Psoas muscle (tissue), 8 donors: ENCODE measurements at regions of chr3 and their contacts with region 1.

Region 1: DNA sequence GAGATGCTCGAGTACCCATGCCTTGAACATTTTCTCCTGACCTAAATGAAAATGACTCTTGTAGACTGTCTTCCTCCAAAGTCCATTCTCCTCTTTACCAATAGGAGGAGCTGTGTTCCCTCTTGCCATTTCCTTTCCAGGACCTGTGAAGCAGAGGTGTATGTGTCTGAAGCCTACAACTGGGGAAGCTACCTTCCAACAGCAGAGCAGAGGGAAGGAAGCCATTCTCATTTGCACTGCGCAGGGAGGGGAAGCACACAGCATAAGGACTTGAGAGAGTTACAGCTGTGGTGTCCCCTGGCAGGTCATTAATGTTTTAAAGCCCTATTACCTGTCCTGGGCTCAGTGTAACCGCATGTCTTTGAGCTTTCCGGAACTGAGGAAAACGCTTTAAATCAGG is 38.7 kb downstream of the HSPBAP1 start:
- DNase-seq: no peak
- ATAC-seq: peak; percentile 79 to 87 (median 83)
- H3K4me3 ChIP-seq: no peak overlapping the region
- H3K27ac ChIP-seq: peak overlapping the region; percentile 44
- H3K4me1 ChIP-seq: peaks cover 5% of the 10 kb centered on the region
- H3K27me3 ChIP-seq: no peaks in the 10 kb centered on the region
- CTCF ChIP-seq: peak; percentile 69

Region 2: GRCh38 chr3:122458992-122459391 is 295.9 kb before region 1 on chr3:
- intact Hi-C with region 1: no loop called
- DNase-seq: no peak
- ATAC-seq: peak in 1 of 4 donors; percentile 45
- H3K4me3 ChIP-seq: no peak overlapping the region
- H3K27ac ChIP-seq: no peak overlapping the region
- H3K4me1 ChIP-seq: no peaks in the 10 kb centered on the region
- H3K27me3 ChIP-seq: no peaks in the 10 kb centered on the region
- CTCF ChIP-seq: peak; percentile 40

Region 3: DNA sequence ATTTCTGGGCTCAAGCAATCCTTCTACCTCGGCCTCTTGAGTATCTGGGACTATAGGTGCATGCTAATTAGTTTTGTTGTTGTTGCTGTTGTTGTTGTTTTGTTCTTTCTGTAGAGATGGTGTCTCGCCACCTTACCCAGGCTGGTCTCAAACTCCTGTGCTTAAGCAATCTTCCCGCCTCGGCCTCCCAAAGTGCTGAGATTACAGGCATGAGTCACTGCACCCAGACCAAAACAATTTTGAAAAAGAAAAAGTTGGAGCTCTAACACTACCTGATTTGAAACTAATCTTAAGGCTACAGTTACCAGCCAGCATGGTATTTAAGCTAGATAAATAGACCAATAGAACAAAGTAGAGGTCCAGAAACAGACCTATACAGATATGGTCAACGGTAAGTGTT is 269.9 kb before region 1 on chr3:
- intact Hi-C with region 1: no loop called
- DNase-seq: peak in 1 of 2 donors; percentile 17
- ATAC-seq: peak; percentile 23 to 69 (median 41)
- H3K4me3 ChIP-seq: no peak overlapping the region
- H3K27ac ChIP-seq: peak overlapping the region; percentile 38
- H3K4me1 ChIP-seq: peaks cover 39% of the 10 kb centered on the region
- H3K27me3 ChIP-seq: no peaks in the 10 kb centered on the region
- CTCF ChIP-seq: no peak

Region 4: GRCh38 chr3:122793568-122794416 is 38.9 kb after region 1 on chr3 and contains the start of gene HSPBAP1:
- intact Hi-C with region 1: loop called in 1 of 2 experiments (anchors 5 kb)
- DNase-seq: peak; percentile 95 to 97
- ATAC-seq: peak; percentile 77 to 85 (median 82)
- H3K4me3 ChIP-seq: peak within 1 kb of the TSS; percentile 93
- H3K27ac ChIP-seq: peak within 1 kb of the TSS; percentile 99
- H3K4me1 ChIP-seq: peaks cover 25% of the 10 kb centered on the region
- H3K27me3 ChIP-seq: no peaks in the 10 kb centered on the region
- CTCF ChIP-seq: no peak
- total RNA-seq, gene HSPBAP1: 4.8 to 18.2 (median 16.2) TPM